GM10248 (cell line): ENCODE measurements at regions of chr12 and their contacts with region 1.

Region 1: DNA sequence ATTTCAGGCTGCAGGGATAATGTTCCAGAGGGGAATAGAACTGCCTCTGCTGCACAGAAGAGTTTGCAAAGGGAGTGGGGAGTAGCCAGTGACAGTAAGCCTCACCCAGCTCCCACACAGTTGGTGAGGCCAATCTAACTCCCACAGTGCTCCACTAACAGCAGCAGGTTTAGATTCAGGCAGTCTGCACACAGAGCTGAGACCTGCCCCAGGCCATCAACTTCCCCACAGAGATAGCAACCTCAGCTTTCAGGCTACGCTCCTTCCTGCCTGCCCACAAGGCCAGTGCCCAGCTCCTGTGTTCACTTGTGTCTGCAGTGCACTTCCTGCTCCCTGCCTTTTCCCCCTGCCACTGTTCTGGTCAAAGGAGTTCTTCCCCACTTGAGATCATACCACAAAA is 107.5 kb downstream of the TBC1D30 start:
- DNase-seq: no peak
- CTCF ChIP-seq: no peak

Region 2: GRCh38 chr12:64916411-64917261 is 15.3 kb before region 1 on chr12:
- CTCF ChIA-PET with region 1: interaction called, 23 read pairs
- POLR2A ChIA-PET with region 1: no interaction called
- DNase-seq: no peak
- CTCF ChIP-seq: no peak

Region 3: DNA sequence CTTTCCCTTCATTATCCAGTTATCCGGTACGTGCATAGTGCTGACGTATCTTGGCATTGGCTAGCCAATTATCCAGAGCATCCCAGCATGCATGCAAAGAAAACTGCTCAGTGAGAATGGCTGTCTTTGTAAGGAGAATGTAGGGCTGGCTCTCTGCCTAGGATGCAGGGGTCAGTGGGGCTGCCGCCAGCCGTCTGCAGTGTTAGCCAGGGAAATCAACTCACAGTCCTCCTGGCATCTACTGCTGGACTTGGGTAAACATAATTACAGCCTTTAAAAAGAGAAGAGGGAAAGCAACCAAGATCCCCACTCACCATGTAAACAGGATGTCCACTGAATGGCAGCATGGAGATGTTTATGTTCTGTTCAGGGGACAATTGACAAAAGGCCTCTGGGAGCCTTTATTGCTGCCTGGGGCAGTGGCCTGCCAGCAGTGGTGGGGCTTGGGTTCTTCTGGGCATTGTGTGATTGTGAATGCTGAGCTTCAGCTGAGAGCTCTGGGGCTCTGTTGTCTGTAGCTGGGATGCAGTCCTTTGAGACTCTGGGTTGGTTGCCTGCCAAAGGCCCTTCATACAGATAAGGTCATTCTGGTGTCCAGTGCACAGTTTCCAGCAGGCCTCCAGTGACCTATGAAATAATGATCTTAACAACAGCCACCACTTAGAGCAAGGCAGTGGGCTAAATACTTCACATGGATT is 14.3 kb after region 1 on chr12:
- CTCF ChIA-PET with region 1: interaction called, 20 read pairs
- POLR2A ChIA-PET with region 1: no interaction called
- DNase-seq: no peak
- CTCF ChIP-seq: no peak